ENCODE measurements at regions of chr5 and their contacts with region 1.

Region 1: GRCh38 chr5:32232441-32233219 is 58.5 kb upstream of the GOLPH3 start:
- DNase-seq: peak; percentile 73 to 80 (median 75)
- ATAC-seq: peak; percentile 84 to 90 (median 86)
- H3K4me3 ChIP-seq: no peak overlapping the region
- H3K27ac ChIP-seq: peak overlapping the region in 8 of 12 donors; percentile 8 to 72 (median 28)
- H3K4me1 ChIP-seq: peaks cover 0 to 38% (median 22%) of the 10 kb centered on the region in 12 donors
- H3K27me3 ChIP-seq: no peaks in the 10 kb centered on the region
- CTCF ChIP-seq: peak; percentile 69 to 88 (median 81)
- POLR2A ChIP-seq: no peak

Region 2: DNA sequence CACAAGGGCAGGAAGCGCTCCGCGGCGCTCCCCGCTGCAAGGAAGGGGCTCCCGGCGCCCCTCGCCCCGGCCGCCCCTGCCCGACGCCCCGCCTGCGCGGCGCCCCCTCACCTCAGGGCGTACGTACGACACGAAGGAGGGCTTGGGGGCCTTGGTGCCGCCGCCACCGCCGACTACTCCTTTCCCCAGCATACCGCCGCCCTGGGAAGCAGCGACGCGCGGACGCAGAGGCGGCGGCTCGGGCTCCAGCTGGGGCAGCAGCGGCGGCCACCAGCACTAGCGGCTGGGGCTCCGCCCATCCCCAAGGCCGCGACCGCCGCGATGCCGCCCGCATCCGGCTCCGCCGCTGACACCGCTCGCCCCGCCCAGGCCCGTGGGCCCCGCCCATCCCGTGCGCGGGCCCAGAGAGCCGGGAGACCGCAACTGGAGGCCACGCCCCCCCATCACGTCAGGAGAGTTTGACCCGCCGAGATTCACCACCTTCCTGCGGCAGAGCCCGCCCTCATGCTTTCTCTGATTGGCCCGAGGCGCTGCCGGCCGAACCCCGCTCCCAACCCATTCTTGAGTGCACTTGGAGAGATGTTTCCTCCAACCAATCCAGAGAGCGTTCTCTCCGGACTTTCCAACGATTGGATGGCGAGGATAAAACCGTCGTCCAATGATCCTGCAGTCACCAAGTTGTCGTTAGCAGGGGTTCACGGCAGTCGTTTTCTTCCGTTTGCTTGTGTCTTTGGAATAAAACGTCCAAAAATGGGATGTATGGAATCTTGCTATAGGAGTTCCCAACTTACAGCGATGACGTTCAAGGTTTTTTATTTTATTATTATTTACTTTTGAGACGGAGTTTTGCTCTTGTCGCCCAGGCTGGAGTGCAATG is 80.3 kb after region 1 on chr5 and contains the start of gene MTMR12:
- intact Hi-C with region 1: loop called in 3 of 10 experiments (anchors 5 kb)
- DNase-seq: peak; percentile 100
- ATAC-seq: peak; percentile 99 to 100 (median 99)
- H3K4me3 ChIP-seq: peak within 1 kb of the TSS; percentile 70 to 100 (median 90)
- H3K27ac ChIP-seq: peak within 1 kb of the TSS; percentile 95 to 100 (median 98)
- H3K4me1 ChIP-seq: peaks cover 4 to 48% (median 34%) of the 10 kb centered on the region in 12 donors
- H3K27me3 ChIP-seq: no peaks in the 10 kb centered on the region
- CTCF ChIP-seq: peak in 2 of 12 donors; percentile 6 to 11
- POLR2A ChIP-seq: peak; percentile 85 to 90
- total RNA-seq, gene MTMR12: 13.3 to 28.7 (median 21.3) TPM

Region 3: DNA sequence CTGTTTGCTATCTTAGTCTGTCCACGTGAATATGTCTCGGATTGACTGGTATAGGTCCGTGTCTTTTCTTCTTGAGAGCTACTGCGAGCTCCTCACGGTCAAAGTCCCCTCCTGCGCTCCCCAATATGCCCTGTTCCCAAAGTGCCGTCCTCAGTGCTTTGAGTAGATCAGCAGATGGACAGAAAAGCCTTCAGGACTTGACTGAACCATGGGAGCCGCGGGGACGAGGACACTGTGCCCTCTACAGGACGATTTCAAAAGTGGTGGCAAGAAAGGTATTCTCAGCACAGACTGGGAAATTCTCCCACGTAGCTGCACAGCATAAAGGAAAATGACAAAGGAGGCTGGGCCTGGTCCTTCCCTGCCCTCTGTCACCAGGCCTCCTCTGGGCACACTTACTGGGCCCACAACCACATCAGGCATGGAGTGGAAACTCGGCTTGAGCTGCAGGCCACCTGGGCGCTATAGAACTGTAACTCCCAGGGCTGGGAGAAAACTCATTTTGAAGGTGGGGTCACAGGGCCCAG is 96.7 kb after region 1 on chr5:
- intact Hi-C with region 1: loop called (anchors 1 to 5 kb)
- DNase-seq: peak; percentile 51 to 68 (median 60)
- ATAC-seq: peak; percentile 70 to 94 (median 92)
- H3K4me3 ChIP-seq: no peak overlapping the region
- H3K27ac ChIP-seq: no peak overlapping the region
- H3K4me1 ChIP-seq: peaks cover 0 to 14% (median 0%) of the 10 kb centered on the region in 12 donors
- H3K27me3 ChIP-seq: no peaks in the 10 kb centered on the region
- CTCF ChIP-seq: peak; percentile 58 to 81 (median 74)
- POLR2A ChIP-seq: no peak

Region 4: GRCh38 chr5:32585446-32586275 is 353.0 kb after region 1 on chr5 and contains the start of gene SUB1:
- intact Hi-C with region 1: loop called in 3 of 10 experiments (anchors 10 kb)
- DNase-seq: peak; percentile 95 to 97 (median 96)
- ATAC-seq: peak; percentile 92 to 96 (median 95)
- H3K4me3 ChIP-seq: peak within 1 kb of the TSS; percentile 85 to 98 (median 93)
- H3K27ac ChIP-seq: peak within 1 kb of the TSS; percentile 93 to 100 (median 99)
- H3K4me1 ChIP-seq: peaks cover 4 to 77% (median 14%) of the 10 kb centered on the region in 12 donors
- H3K27me3 ChIP-seq: no peaks in the 10 kb centered on the region
- CTCF ChIP-seq: peak in 2 of 12 donors; percentile 20 to 22
- POLR2A ChIP-seq: peak in 1 of 2 donors; percentile 69
- total RNA-seq, gene SUB1: 118 to 244 (median 197) TPM

Region 5: DNA sequence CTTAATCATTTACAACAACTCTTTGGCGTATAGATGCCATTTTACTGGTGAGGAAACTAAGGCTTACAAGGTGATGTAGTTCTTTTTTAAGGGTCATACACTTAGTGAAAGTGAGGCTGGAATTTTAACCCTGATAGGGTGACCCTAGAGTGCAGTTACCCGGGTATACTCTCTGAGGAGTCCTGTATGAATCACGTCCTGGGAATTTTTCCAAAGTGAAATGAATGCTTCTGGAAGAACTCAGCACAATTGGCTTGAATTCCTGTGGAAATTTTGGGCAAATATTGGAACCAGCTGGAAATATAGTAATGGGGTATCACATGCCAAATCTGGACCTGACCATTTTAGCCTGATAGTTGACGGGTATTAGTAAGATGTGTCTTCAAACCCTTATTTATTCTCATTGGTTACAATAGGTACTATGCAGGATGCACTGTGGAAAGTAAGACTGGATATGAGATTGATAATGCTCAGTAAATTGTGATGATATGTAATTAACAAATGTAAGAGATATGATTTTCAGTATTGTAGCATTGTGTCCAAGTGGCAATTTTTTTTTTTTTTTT is 367.5 kb after region 1 on chr5:
- intact Hi-C with region 1: loop called in 3 of 10 experiments (anchors 10 kb)
- DNase-seq: peak in 1 of 5 donors; percentile 17
- ATAC-seq: peak; percentile 50 to 83 (median 78)
- H3K4me3 ChIP-seq: no peak overlapping the region
- H3K27ac ChIP-seq: peak overlapping the region in 10 of 12 donors; percentile 8 to 52 (median 23)
- H3K4me1 ChIP-seq: peaks cover 0 to 61% (median 31%) of the 10 kb centered on the region in 12 donors
- H3K27me3 ChIP-seq: no peaks in the 10 kb centered on the region
- CTCF ChIP-seq: no peak
- POLR2A ChIP-seq: no peak

Region 6: GRCh38 chr5:32613050-32613672 is 380.5 kb after region 1 on chr5:
- intact Hi-C with region 1: loop called in 3 of 10 experiments (anchors 5 to 10 kb)
- DNase-seq: peak; percentile 72 to 82 (median 80)
- ATAC-seq: peak; percentile 36 to 71 (median 68)
- H3K4me3 ChIP-seq: no peak overlapping the region
- H3K27ac ChIP-seq: no peak overlapping the region
- H3K4me1 ChIP-seq: peaks cover 0 to 26% (median 9%) of the 10 kb centered on the region in 12 donors
- H3K27me3 ChIP-seq: no peaks in the 10 kb centered on the region
- CTCF ChIP-seq: peak; percentile 82 to 96 (median 91)
- POLR2A ChIP-seq: no peak

Measured in heart left ventricle (tissue), 16 donors.